ENCODE measurements at regions of chr2 and their contacts with region 1.

Region 1: DNA sequence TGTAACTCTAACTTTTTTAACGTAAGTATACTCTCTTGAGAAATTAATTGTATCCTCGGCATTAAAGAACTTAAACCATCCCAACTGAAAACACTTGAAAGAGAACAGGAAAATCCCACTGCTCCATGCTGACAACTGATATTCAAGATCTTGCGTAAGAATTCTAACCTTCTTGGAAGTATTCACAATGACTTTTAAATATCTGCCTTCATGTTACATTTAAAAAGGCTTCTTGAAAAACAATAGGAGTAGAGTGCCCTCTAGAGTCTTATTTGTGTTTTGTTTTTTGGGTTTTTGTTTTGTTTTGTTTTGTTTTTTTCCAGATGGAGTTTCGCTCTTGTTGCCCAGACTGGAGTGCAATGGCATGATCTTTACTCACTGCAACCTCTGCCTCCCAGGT is 65.4 kb upstream of the DNAJC10 start:
- DNase-seq: no peak
- ATAC-seq: no peak
- H3K4me3 Mint-ChIP-seq: no peak overlapping the region
- H3K27ac Mint-ChIP-seq: no peak overlapping the region
- H3K4me1 Mint-ChIP-seq: peaks cover 8% of the 10 kb centered on the region
- H3K27me3 Mint-ChIP-seq: no peaks in the 10 kb centered on the region

Region 2: GRCh38 chr2:181742922-181743722 is 907.6 kb before region 1 on chr2:
- CTCF ChIA-PET with region 1: no interaction called
- POLR2A ChIA-PET with region 1: no interaction called
- intact Hi-C with region 1: loop called in 1 of 2 experiments (anchors 2 kb)
- DNase-seq: peak; percentile 56
- ATAC-seq: no peak
- H3K4me3 Mint-ChIP-seq: no peak overlapping the region
- H3K27ac Mint-ChIP-seq: no peak overlapping the region
- H3K4me1 Mint-ChIP-seq: peaks cover 4% of the 10 kb centered on the region
- H3K27me3 Mint-ChIP-seq: peaks cover under 1% of the 10 kb centered on the region

Region 3: GRCh38 chr2:182186132-182186735 is 464.5 kb before region 1 on chr2:
- CTCF ChIA-PET with region 1: interaction called, 14 read pairs
- POLR2A ChIA-PET with region 1: no interaction called
- intact Hi-C with region 1: loop called (anchors 1 kb)
- DNase-seq: no peak
- ATAC-seq: no peak
- H3K4me3 Mint-ChIP-seq: no peak overlapping the region
- H3K27ac Mint-ChIP-seq: no peak overlapping the region
- H3K4me1 Mint-ChIP-seq: no peaks in the 10 kb centered on the region
- H3K27me3 Mint-ChIP-seq: peaks cover 3% of the 10 kb centered on the region

Region 4: DNA sequence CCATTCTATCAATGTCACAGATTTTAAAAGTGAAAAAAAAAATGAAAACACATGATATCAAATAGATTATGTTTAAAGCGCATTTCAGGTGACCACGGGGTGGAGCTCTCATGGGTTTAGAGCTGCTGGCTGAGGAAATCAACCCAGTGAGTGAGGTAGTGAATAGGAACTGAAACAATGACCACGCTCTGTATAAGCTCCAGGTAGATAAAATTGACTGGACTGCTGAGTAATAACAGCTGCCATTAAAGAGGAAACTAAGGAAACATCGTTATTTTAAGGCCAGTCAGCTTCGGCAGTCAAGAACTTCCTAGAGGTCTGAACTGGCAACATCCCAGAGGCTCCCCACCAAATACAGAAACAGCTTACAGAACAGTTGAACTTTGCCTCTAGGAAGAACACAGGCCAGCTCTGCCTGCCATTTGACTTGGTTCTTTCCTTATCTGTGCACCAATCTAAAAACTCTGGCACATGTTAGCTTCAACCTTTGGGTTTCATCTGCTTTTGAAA is 409.8 kb before region 1 on chr2:
- CTCF ChIA-PET with region 1: interaction called, 13 read pairs
- POLR2A ChIA-PET with region 1: no interaction called
- intact Hi-C with region 1: loop called (anchors 1 to 5 kb)
- DNase-seq: peak; percentile 49
- ATAC-seq: peak; percentile 64
- H3K4me3 Mint-ChIP-seq: no peak overlapping the region
- H3K27ac Mint-ChIP-seq: no peak overlapping the region
- H3K4me1 Mint-ChIP-seq: peaks cover 2% of the 10 kb centered on the region
- H3K27me3 Mint-ChIP-seq: peaks cover 3% of the 10 kb centered on the region

Region 5: DNA sequence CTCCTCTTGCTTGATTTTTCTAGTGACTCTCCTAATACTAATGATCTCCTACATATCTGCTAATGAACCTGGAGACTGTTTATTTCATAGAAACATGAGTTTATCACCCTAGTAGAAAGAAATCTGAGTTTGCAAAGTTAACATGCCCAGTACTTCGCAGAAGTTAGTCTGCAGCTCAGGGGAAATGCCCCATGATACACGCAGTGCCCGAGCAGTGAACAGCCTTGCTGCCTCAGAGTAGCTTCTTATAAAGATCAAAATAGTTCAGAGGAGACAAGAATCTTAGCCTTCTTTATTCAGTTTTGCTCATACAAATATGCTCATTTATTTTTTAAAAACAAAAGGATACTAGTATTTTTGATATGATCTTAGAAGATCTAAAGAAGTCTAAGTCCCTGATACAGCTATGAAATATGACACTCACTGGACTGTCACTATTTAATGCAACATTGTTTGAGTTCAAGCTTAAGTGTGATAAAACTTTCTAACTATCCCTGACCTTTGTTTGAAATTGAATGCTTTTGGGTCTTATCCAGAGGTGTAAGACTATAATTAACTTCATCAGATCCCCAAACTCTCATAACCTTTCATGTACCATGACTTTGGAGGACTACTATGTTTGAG is 195.2 kb after region 1 on chr2:
- CTCF ChIA-PET with region 1: no interaction called
- POLR2A ChIA-PET with region 1: no interaction called
- intact Hi-C with region 1: no loop called
- DNase-seq: no peak
- ATAC-seq: no peak
- H3K4me3 Mint-ChIP-seq: no peak overlapping the region
- H3K27ac Mint-ChIP-seq: no peak overlapping the region
- H3K4me1 Mint-ChIP-seq: no peaks in the 10 kb centered on the region
- H3K27me3 Mint-ChIP-seq: peaks cover 13% of the 10 kb centered on the region

Measured in activated CD4-positive, alpha-beta T cell treated with anti-CD3 and anti-CD28 coated beads for 36 hours (primary cell).